HEK293T (cell line): ENCODE measurements at regions of chr22 and their contacts with region 1.

Region 1: DNA sequence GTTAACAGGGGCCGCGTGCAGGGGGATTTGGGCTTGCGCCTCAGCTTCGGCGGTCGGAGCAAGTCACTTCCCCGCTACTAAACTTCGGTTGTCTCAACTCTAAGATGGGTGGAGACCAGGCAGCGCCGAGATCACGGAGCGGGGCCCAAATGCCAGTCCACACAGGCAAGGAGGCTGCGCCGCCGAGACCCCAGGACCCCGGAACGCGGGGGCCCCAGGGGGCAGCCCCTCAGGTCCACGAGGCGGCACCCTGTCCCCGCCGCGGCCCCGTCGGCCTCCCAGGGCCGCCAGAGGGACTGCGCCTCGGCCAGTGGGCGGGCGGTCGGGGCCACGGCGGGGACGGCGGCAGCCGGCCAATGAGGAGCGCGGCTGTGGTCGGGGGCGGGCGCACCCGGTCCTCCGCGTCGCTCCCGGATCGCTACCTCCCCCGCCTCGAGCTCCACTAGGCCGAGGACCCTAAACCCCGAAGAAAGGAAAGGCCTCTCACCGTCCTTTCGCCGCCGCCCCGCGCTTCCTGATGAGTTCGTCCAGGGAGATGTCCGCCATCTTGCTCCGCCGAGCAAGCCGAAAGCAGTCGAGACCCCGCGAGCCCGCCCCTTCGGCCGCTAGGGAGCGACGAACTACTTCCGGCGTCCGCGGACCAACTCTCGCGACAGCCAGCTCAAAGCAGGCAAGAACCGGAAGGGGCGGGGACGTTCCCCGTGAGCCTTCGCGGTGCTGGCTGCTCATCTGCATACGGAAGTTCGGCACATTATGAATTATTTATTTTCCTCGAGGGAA is at the start of gene POLDIP3:
- DNase-seq: peak; percentile 97

Region 2: DNA sequence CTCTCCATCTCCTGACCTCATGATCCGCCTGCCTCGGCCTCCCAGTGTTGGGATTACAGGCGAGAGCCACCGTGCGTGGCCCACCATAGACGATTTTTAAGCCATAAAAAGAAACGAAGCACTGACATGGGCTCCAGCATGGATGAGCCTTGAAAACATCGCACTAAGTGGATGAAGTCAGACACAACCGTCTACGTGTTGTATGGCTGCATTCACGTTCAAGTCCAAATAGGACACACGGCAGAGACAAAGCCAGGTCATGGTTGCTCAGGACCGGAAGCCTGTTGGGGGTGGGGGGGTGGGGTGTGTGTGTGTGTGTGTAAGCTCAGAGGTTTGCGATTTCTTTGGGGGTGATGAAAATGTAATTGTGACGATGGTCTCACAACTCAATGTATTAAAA is 105.0 kb before region 1 on chr22:
- CTCF ChIA-PET with region 1: no interaction called
- POLR2A ChIA-PET with region 1: no interaction called
- DNase-seq: no peak

Region 3: GRCh38 chr22:42565956-42566355 is 48.5 kb before region 1 on chr22:
- CTCF ChIA-PET with region 1: no interaction called
- POLR2A ChIA-PET with region 1: interaction called, 10 read pairs
- DNase-seq: no peak

Region 4: GRCh38 chr22:42596336-42596735 is 18.2 kb before region 1 on chr22:
- CTCF ChIA-PET with region 1: no interaction called
- POLR2A ChIA-PET with region 1: interaction called, 20 read pairs
- DNase-seq: no peak

Region 5: DNA sequence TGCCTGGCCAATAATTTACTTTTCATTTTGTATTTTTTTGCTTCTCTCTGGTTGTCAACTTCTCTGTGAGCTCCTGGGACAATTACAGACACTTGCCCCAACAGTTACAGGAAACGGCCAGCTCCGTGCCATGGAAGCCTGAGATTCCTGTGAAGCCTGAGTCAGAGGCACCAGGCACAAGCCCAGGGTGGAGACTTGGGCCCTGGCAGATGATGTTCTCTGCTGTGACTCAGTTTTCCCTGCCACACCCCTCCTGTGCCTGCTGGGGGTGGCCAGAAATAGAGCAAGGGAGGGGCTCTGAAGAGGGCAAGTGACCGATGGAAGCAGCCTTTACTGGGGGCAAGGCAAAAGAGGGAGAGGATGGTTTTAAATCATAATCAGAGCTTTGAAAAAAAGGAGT is 21.0 kb after region 1 on chr22:
- CTCF ChIA-PET with region 1: no interaction called
- POLR2A ChIA-PET with region 1: interaction called, 13 read pairs
- DNase-seq: no peak

Region 6: DNA sequence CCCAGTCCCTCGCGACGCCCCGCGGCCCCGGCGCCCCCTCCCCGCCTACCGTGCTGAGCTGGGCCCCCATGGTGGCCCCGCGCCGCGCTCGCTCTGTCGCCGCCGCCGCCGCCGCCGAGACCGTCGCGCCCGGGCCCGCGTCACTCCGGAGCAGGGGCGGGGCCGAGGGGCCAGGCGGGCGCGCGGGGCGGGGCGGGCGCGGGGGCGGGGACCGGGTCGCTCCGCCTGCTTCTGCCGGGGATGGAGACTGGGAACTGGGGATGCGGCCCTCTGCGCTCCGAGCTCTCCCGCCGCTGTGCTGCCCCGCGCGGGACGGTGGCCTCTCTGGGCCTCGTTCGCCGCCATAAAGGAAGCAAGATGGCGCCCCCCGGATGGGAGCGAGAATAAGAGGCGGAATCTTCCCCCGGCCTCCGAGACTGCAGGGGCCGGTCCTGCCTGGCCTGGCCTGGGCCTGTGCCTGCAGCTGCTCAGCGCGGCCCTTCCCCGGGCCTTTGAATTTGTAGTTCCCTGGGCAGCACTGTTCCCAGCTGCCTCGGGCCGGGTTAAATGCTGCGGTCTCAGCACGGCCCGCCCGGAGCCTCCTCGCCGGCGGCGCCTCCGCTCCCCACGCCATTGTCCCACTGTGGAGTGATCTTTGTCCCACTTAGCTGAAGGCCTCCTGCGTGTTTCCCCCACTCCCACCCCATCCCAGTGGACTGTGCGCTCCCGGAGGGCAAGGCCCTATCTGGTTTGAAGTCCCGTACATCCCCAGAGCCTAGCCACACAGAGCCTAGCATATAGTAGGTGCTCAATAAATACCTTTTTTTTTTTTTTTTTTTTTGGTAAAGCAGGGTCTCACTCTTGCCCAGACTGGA is 35.0 kb after region 1 on chr22 and contains the start of gene CYB5R3:
- CTCF ChIA-PET with region 1: no interaction called
- POLR2A ChIA-PET with region 1: interaction called, 24 read pairs
- DNase-seq: peak; percentile 95